ENCODE measurements at regions of chr12 and their contacts with region 1.

Region 1: DNA sequence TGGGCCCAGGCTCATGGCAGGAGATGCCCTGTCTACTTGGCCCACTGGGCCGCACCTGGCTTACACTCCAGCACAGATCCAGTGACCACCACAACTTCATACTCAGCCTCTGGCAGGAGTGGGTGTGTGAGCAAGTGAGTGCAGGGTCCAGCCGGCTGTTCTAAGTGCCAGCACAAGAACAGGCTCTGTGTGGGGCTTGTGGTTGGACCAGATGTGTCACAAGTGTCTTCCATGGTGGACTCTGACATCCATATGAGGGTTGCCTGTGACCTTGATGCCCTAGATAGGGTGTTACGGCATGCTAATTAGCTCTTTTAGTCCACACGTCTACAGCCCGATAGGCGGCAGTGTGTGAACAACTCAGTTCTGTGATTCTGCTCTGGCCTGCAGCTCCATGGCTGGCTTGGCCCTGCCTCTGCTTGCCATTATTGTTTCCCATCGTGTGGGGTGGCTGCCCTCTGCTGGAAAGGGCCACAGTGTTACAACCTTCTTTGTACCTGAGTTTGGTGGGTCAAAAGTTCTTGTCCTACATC is 1089.1 kb downstream of the SLC6A15 start:
- DNase-seq: peak; percentile 49
- H3K4me3 ChIP-seq: no peak overlapping the region
- H3K27ac ChIP-seq: no peak overlapping the region
- H3K4me1 ChIP-seq: peaks cover 7% of the 10 kb centered on the region
- H3K27me3 ChIP-seq: no peaks in the 10 kb centered on the region
- CTCF ChIP-seq: peak; percentile 61 to 70

Region 2: DNA sequence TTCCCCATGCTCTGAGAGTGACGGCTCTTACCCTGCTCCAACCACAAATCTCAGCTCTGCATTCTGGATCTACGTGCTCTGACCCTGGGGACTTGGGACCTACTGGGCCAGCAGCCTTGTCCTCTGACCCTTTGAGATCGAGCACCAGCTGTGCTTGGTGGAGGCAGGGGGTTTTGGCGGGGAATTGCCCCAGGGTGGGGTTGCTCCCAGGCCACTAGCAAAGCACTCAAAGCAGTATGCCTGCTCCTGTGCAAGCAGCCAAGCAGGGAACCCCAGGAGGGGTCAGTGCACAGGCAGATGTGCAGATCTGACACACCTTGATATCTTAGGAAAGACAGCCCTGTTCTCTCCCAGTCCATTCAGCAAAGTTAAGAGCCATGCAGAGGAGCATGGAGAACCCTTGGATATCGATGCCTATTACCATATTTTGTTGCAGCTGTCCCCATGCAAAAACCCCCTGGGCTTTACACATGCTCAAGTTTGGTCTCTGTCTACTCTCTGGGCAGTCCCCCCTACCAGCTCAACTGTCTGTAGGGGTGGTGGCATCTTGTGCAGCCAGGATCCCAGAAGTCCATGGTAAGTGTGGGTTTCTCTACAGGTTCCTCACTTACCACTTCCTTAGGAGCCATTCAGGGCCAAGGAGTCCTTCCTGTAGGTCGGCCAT is 817.8 kb before region 1 on chr12:
- CTCF ChIA-PET with region 1: no interaction called
- dilution Hi-C with region 1: no loop called
- in situ Hi-C with region 1: no loop called
- intact Hi-C with region 1: loop called (anchors 1 kb)
- DNase-seq: no peak
- H3K4me3 ChIP-seq: no peak overlapping the region
- H3K27ac ChIP-seq: no peak overlapping the region
- H3K4me1 ChIP-seq: no peaks in the 10 kb centered on the region
- H3K27me3 ChIP-seq: no peaks in the 10 kb centered on the region
- CTCF ChIP-seq: no peak

Region 3: GRCh38 chr12:83954939-83955601 is 131.6 kb after region 1 on chr12:
- CTCF ChIA-PET with region 1: no interaction called
- dilution Hi-C with region 1: no loop called
- in situ Hi-C with region 1: no loop called
- intact Hi-C with region 1: loop called (anchors 1 kb)
- DNase-seq: peak; percentile 12
- H3K4me3 ChIP-seq: no peak overlapping the region
- H3K27ac ChIP-seq: no peak overlapping the region
- H3K4me1 ChIP-seq: no peaks in the 10 kb centered on the region
- H3K27me3 ChIP-seq: no peaks in the 10 kb centered on the region
- CTCF ChIP-seq: peak in 1 of 2 donors; percentile 52

Region 4: DNA sequence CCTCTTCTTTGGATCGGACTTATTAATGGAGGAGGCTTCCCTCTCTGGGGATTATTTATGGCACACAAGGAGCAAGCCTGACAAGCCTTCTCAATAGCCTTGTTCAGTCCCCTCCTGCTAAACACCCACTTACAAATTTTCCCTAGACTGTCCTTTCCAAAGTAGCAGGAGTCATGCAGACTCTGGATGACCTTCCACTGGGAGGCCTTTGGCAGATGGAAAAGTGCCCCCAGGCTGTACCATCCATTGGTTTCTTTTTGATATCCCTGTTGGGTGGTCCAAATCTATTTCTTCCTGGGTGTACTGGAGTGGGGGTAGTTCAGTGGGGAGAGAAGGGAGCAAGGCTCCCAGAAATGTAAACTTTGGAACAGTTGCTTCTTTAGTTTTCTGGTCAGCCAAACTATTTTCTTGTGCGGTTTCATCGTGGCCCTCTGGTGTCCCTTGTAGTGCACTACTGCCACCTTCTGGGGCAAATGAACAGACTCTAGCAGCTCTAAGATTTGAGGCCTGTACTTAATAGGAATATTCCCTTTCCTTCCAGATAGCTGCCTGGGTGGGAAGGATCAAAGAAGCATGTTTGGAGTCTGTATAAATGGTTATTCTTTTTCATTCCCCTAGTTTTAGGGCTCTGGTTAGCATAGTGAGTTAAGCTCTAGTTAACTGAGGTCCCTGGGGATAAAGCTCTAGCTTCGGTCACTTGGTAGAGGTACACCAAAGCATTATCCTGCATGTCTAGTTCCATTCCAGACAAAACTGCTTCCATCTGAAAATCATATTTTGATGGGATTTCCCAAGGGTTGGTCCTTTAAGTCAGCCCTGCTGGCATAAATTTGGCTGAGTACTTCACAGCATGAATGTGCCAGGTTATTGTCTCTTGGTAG is 679.6 kb after region 1 on chr12:
- CTCF ChIA-PET with region 1: interaction called, 5 read pairs
- dilution Hi-C with region 1: no loop called
- in situ Hi-C with region 1: no loop called
- intact Hi-C with region 1: loop called (anchors 1 kb)
- DNase-seq: peak; percentile 66
- H3K4me3 ChIP-seq: no peak overlapping the region
- H3K27ac ChIP-seq: peak overlapping the region; percentile 10
- H3K4me1 ChIP-seq: peaks cover 19% of the 10 kb centered on the region
- H3K27me3 ChIP-seq: no peaks in the 10 kb centered on the region
- CTCF ChIP-seq: peak; percentile 56 to 59

Region 5: GRCh38 chr12:84842406-84843013 is 1019.0 kb after region 1 on chr12:
- CTCF ChIA-PET with region 1: interaction called, 3 read pairs
- dilution Hi-C with region 1: no loop called
- in situ Hi-C with region 1: no loop called
- intact Hi-C with region 1: loop called (anchors 5 kb)
- DNase-seq: peak; percentile 30
- H3K4me3 ChIP-seq: no peak overlapping the region
- H3K27ac ChIP-seq: no peak overlapping the region
- H3K4me1 ChIP-seq: no peaks in the 10 kb centered on the region
- H3K27me3 ChIP-seq: no peaks in the 10 kb centered on the region
- CTCF ChIP-seq: peak; percentile 81

Measured in mammary epithelial cell (primary cell).